ENCODE measurements at regions of chr15 and their contacts with region 1.

Region 1: DNA sequence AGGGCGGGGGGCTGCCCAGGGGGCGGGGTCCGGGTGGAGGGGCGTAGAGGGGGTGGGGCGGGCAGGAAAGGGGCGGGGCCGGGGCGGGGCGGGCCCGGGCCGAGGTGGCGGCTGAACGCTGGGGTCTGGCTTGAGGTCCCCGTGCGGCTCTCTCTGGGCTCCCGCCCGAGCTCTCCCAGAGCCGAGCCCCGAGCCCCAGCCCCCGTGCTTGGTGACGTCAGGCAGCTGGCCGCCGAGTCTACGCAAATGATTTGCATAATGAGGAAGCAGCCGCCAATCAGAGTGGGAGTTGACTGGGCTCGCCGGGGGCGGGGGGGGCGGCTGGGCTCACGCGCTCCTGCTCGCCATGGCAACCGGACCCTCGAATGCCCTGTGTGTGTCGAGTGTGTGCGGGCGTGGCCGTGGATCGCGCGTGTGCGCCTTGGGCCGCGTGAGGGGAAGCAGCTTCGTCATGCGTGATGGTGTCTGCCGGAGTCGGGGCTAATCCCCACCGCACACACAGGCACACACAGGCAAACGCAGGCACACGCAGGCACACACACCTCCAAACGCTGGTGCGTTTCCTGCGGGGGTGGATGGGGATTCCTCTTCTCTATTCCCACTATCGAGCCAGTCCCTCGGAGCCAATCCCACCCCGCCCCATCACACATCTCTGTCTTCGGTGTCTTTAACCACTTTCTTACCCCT is at the start of gene CELF6:
- DNase-seq: peak; percentile 73
- H3K4me3 Mint-ChIP-seq: peak within 1 kb of the TSS; percentile 84
- H3K27ac Mint-ChIP-seq: peak within 1 kb of the TSS; percentile 60
- H3K4me1 Mint-ChIP-seq: peaks cover 19% of the 10 kb centered on the region
- H3K27me3 Mint-ChIP-seq: peaks cover 21% of the 10 kb centered on the region
- total RNA-seq, gene CELF6: 0.26 and 0.27 TPM in 2 replicates

Region 2: DNA sequence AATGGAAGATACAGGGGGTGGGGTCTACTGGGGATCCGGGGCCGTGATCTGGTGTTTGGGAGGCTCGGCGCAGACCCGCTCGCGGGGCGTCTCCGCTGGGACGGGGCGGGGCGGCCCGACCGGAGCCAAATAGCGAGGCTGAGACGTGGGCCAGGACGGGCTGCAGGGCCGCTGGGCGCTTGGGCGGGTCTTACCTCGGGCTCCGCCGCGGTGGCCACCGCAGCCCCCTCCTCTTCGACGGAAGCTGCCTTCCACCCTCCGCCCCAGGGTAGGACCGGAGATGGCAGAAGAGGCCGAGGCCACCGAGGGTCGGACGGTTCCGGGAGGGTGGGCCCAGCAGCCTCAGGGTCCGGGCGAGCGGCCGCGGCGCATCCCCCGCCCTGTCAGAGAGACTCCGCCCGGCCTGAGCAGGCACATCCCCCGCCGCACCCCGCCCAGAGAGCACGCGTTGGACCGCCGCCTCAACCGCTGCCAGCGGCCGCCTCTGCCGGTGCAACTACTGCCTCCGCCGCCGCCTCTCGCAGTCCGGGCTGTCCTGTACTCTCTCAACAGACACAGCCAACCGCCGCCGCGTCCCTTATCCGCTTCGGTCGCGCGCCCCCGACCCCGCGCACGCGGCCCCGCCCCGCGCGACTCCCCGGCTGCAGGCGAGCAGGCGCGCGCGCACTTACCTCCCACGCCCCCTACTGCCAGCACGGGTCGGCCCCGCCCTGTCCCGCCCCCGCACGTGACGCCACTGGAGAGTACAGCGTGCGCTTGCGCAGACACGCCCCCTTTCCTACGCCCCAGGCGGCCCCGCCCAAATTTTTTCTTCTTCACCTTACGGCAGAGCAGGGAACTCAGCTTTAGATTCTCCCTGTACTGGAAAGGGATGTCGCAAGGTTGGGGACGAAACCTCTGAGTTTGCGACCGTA is 202.4 kb before region 1 on chr15 and contains the start of gene MYO9A:
- intact Hi-C with region 1: loop called (anchors 2 kb)
- DNase-seq: peak; percentile 95
- H3K4me3 Mint-ChIP-seq: peak within 1 kb of the TSS; percentile 93
- H3K27ac Mint-ChIP-seq: peak within 1 kb of the TSS; percentile 95
- H3K4me1 Mint-ChIP-seq: peaks cover 23% of the 10 kb centered on the region
- H3K27me3 Mint-ChIP-seq: peaks cover 16% of the 10 kb centered on the region
- total RNA-seq, gene MYO9A: 15.2 and 16.4 TPM in 2 replicates

Region 3: DNA sequence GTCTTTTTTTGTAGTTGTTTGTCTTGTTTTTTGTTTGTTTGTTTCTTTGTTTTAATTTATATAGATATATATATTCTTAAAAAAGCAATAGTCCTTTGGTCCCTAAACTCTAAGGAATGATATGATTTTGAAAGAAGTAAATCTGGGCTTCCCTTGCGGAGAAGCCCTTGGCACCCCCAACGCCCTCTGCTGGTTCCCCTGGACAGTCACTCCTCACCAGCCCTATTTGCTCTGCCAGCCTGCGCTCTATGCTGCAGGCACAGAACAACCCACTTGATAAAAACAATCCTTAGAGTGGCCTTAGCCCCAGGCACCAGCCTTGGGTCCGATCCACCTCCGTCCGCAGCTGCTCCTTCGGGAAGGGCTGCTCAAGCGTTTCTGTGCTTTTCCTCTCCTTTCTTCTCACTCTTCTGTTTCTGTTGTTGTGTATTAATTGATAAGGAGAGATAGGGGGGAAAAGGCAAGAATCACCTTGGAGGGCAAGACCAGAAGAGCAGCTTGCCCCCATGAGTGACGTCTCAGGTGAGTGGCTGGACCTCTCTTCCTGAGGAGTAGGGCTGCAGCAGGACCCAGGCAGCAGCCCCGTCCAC is 34.1 kb before region 1 on chr15:
- intact Hi-C with region 1: no loop called
- DNase-seq: no peak
- H3K4me3 Mint-ChIP-seq: no peak overlapping the region
- H3K27ac Mint-ChIP-seq: peak overlapping the region; percentile 21
- H3K4me1 Mint-ChIP-seq: no peaks in the 10 kb centered on the region
- H3K27me3 Mint-ChIP-seq: no peaks in the 10 kb centered on the region

Region 4: GRCh38 chr15:72671535-72671934 is 351.4 kb after region 1 on chr15:
- intact Hi-C with region 1: loop called (anchors 10 kb)
- DNase-seq: no peak
- H3K4me3 Mint-ChIP-seq: no peak overlapping the region
- H3K27ac Mint-ChIP-seq: no peak overlapping the region
- H3K4me1 Mint-ChIP-seq: peaks cover 11% of the 10 kb centered on the region
- H3K27me3 Mint-ChIP-seq: peaks cover 15% of the 10 kb centered on the region